Activated CD8-positive, alpha-beta T cell treated with anti-CD3 and anti-CD28 coated beads, Interleukin-2, amount 10 ng/mL, durations not matched to agents 7 days and 5 days (primary cell): ENCODE measurements at regions of chr20 and their contacts with region 1.

Region 1: DNA sequence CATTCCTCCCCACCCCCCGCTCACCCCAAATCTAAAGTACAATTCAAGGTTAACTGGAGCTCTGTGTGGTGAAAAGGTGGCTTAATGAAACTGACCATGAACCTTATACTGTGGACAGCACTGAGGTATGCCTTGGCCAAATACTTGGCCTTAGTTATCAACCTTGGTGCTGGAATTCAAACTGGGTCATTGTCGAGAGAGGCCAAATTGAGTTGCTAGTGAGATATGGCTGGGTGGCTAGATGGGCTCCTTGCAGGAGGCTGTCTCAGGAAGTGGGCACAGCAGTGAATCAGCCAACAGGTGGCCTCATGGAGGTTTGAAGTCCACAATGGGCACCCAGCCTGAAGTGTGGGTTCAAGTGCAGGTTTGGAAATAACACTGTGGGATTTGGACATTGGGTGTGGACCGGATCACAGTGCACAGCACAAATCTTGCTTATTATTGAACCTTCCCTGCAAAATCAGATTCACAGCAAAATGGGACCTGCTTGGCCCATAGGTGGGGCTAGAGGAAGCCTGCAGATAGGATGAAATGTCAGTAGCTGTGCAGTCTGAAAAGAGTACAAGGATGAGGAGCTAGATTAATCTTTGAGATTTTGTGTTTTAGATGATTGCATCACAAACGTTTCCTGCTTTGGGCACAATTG is 5.6 kb upstream of the BTBD3 start:
- DNase-seq: no peak
- ATAC-seq: no peak
- H3K4me3 Mint-ChIP-seq: no peak overlapping the region
- H3K27ac Mint-ChIP-seq: no peak overlapping the region
- H3K4me1 Mint-ChIP-seq: peaks cover 8% of the 10 kb centered on the region
- H3K27me3 Mint-ChIP-seq: no peaks in the 10 kb centered on the region

Region 2: GRCh38 chr20:11901127-11901526 is 11.0 kb before region 1 on chr20:
- CTCF ChIA-PET with region 1: interaction called, 17 read pairs
- POLR2A ChIA-PET with region 1: no interaction called
- DNase-seq: no peak
- ATAC-seq: no peak
- H3K4me3 Mint-ChIP-seq: no peak overlapping the region
- H3K27ac Mint-ChIP-seq: no peak overlapping the region
- H3K4me1 Mint-ChIP-seq: no peaks in the 10 kb centered on the region
- H3K27me3 Mint-ChIP-seq: no peaks in the 10 kb centered on the region